Esophagus squamous epithelium (tissue), 5 donors: ENCODE measurements at regions of chr5 and their contacts with region 1.

Region 1: GRCh38 chr5:111762895-111763294 is 5.9 kb upstream of the NREP start:
- DNase-seq: no peak
- H3K4me3 ChIP-seq: no peak overlapping the region
- H3K27ac ChIP-seq: no peak overlapping the region
- H3K4me1 ChIP-seq: peaks cover 0 to 6% (median 2%) of the 10 kb centered on the region in 3 donors
- H3K27me3 ChIP-seq: no peaks in the 10 kb centered on the region
- CTCF ChIP-seq: no peak
- POLR2A ChIP-seq: no peak

Region 2: DNA sequence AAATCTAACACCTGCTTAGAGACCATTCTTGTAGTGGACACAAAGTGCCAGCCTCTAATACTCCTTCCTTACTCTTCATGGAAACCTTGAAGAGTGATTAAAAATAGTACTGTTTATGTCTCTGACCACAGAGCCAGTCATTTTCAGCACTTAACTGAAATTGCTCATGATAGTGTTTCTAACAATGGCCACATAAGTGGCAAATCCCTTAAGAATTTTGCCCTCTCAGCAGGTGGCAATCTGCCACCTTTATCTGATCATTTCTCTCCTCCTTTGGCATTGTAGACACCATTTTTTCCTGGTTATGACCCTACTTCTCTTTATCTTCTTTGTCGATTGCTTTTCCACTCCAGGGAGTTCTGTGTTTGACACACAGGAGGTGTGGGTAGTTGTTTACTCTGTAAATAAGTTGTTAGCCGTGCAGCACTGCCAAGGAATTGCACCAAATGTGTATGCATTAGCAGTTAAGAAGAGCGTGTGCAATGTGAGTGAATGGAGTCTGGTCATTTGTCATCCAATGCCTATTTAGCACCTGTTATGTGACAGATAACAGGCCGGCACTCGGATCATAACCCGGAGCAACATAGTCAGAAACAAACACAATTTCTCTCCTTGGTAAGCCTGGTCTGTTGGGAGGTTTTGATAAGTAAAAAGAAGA is 213.8 kb before region 1 on chr5:
- intact Hi-C with region 1: loop called (anchors 10 kb)
- DNase-seq: no peak
- H3K4me3 ChIP-seq: no peak overlapping the region
- H3K27ac ChIP-seq: no peak overlapping the region
- H3K4me1 ChIP-seq: peaks cover 0 to 12% (median 0%) of the 10 kb centered on the region in 3 donors
- H3K27me3 ChIP-seq: no peaks in the 10 kb centered on the region
- CTCF ChIP-seq: no peak
- POLR2A ChIP-seq: no peak